Caco-2 (cell line): ENCODE measurements at regions of chr6 and their contacts with region 1.

Region 1: GRCh38 chr6:75934643-75935472 is 137.6 kb downstream of the IMPG1 start:
- DNase-seq: peak; percentile 50 to 61
- H3K4me3 ChIP-seq: no peak overlapping the region
- H3K4me3 Mint-ChIP-seq: peak overlapping the region; percentile 58
- H3K27ac Mint-ChIP-seq: no peak overlapping the region
- H3K4me1 ChIP-seq: no peaks in the 10 kb centered on the region
- H3K4me1 Mint-ChIP-seq: peaks cover 4% of the 10 kb centered on the region
- H3K27me3 ChIP-seq: no peaks in the 10 kb centered on the region
- H3K27me3 Mint-ChIP-seq: peaks cover 3% of the 10 kb centered on the region
- CTCF ChIP-seq: peak; percentile 54 to 79

Region 2: DNA sequence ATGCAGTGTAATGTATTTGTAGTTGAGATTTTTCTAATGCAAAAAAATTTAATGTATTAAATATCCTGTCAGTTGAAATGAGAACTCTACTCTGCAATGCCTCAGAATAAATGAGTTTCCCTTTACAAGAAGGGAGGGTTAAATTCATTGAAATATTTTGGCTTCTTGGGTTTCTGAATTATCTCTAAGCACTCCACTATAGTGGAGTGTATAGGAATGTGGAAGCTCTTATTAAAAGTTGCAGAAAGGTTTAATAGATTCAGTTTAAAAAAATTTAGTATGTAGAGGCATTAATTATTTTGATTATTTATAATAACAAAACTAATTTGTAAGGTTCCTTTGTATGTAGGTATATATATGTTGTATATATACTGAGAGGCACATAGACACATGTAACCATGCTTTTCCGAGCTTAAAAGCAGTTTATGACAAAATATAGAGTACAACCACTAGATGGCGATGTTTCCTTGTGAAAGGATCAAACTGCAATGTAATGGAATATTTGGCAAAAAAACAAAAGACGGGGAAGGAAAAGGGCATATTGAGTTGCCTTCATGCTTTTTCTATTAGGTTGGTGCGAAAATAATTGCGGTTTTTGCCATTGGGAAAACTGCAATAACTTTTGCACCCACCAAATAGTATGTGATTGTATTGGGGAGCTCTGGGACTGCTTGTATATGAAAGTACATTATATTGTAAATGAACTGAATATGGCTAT is 41.6 kb before region 1 on chr6:
- CTCF ChIA-PET with region 1: interaction called, 13 read pairs
- POLR2A ChIA-PET with region 1: no interaction called
- intact Hi-C with region 1: loop called (anchors 1 kb)
- DNase-seq: peak in 1 of 2 experiments; percentile 53
- H3K4me3 ChIP-seq: no peak overlapping the region
- H3K4me3 Mint-ChIP-seq: no peak overlapping the region
- H3K27ac Mint-ChIP-seq: no peak overlapping the region
- H3K4me1 ChIP-seq: no peaks in the 10 kb centered on the region
- H3K4me1 Mint-ChIP-seq: no peaks in the 10 kb centered on the region
- H3K27me3 ChIP-seq: no peaks in the 10 kb centered on the region
- H3K27me3 Mint-ChIP-seq: no peaks in the 10 kb centered on the region
- CTCF ChIP-seq: peak; percentile 52 to 53

Region 3: DNA sequence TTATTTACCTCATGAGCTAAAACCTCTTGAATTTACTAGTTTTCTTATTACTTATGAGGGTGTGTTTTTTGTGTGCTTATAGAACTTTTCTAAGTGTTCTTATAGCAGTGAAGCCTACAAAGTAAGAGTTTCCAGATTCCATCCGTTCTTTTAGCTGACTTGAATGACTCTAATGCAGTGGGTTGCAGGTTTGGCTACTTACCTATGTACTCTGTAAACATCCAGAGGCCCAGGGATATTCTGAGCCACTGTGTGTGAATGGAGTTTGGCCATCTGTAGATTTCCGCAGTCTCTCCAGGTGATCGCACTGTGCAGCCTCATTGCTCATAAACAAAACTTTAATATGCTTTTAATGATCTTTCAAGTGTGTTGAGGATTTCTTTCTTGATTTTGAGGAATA is 28.0 kb before region 1 on chr6:
- CTCF ChIA-PET with region 1: no interaction called
- POLR2A ChIA-PET with region 1: no interaction called
- intact Hi-C with region 1: no loop called
- DNase-seq: no peak
- H3K4me3 ChIP-seq: no peak overlapping the region
- H3K4me3 Mint-ChIP-seq: no peak overlapping the region
- H3K27ac Mint-ChIP-seq: no peak overlapping the region
- H3K4me1 ChIP-seq: 0 out of 2 replicates have a peak, but pooled peaks cover 11% of the 10 kb centered on the region
- H3K4me1 Mint-ChIP-seq: peaks cover 14% of the 10 kb centered on the region
- H3K27me3 ChIP-seq: no peaks in the 10 kb centered on the region
- H3K27me3 Mint-ChIP-seq: no peaks in the 10 kb centered on the region
- CTCF ChIP-seq: no peak

Region 4: GRCh38 chr6:75991959-75992358 is 57.1 kb after region 1 on chr6:
- CTCF ChIA-PET with region 1: interaction called, 5 read pairs
- POLR2A ChIA-PET with region 1: no interaction called
- intact Hi-C with region 1: loop called (anchors 1 kb)
- DNase-seq: peak in 1 of 2 experiments; percentile 15
- H3K4me3 ChIP-seq: no peak overlapping the region
- H3K4me3 Mint-ChIP-seq: no peak overlapping the region
- H3K27ac Mint-ChIP-seq: no peak overlapping the region
- H3K4me1 ChIP-seq: no peaks in the 10 kb centered on the region
- H3K4me1 Mint-ChIP-seq: no peaks in the 10 kb centered on the region
- H3K27me3 ChIP-seq: no peaks in the 10 kb centered on the region
- H3K27me3 Mint-ChIP-seq: peaks cover 12% of the 10 kb centered on the region
- CTCF ChIP-seq: peak in 1 of 2 experiments; percentile 4

Region 5: DNA sequence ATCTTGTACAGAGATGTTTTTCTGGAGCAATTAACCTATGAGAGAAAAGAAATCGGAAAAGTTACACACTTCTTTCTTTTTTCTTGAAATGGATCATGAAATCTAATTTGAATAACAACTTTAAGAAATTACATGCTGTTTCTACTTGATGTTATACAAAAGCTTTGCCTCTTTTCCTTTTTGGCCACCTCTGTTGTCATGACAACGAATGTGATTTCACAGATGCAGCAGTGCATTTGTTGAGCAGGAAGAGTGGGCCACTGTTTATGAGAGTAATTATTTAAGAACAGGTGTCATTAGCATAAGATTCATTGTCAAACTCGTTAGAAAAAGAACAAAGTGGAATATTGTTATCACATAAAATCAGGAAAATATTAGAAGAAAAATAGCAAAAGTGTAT is 285.9 kb after region 1 on chr6:
- CTCF ChIA-PET with region 1: no interaction called
- POLR2A ChIA-PET with region 1: no interaction called
- intact Hi-C with region 1: loop called (anchors 10 kb)
- DNase-seq: no peak
- H3K4me3 ChIP-seq: no peak overlapping the region
- H3K4me3 Mint-ChIP-seq: no peak overlapping the region
- H3K27ac Mint-ChIP-seq: no peak overlapping the region
- H3K4me1 ChIP-seq: no peaks in the 10 kb centered on the region
- H3K4me1 Mint-ChIP-seq: no peaks in the 10 kb centered on the region
- H3K27me3 ChIP-seq: no peaks in the 10 kb centered on the region
- H3K27me3 Mint-ChIP-seq: peaks cover 8% of the 10 kb centered on the region
- CTCF ChIP-seq: no peak

Region 6: DNA sequence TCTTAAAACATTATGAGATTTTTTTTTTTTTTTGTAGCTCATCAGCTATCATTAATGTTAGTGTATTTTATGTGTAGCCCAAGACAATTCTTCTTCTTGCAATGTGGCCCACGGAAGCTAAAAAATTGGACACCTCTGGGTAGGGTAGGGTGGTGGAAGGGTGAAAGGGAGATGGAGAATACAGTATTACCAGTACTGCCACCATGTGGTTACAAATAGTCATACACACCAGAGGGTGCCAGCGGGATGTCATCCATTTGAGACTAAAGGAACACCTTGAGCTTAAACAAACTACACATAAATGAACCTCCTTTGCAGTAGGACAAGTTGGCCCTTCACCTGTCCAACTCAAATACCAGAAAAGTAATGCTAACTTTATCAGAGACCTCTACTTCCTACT is 926.5 kb after region 1 on chr6:
- CTCF ChIA-PET with region 1: interaction called, 3 read pairs
- POLR2A ChIA-PET with region 1: no interaction called
- intact Hi-C with region 1: loop called (anchors 2 kb)
- DNase-seq: peak in 1 of 2 experiments; percentile 46
- H3K4me3 ChIP-seq: no peak overlapping the region
- H3K4me3 Mint-ChIP-seq: no peak overlapping the region
- H3K27ac Mint-ChIP-seq: no peak overlapping the region
- H3K4me1 ChIP-seq: no peaks in the 10 kb centered on the region
- H3K4me1 Mint-ChIP-seq: no peaks in the 10 kb centered on the region
- H3K27me3 ChIP-seq: no peaks in the 10 kb centered on the region
- H3K27me3 Mint-ChIP-seq: no peaks in the 10 kb centered on the region
- CTCF ChIP-seq: peak; percentile 30 to 52